ENCODE measurements at regions of chr18 and their contacts with region 1.

Region 1: DNA sequence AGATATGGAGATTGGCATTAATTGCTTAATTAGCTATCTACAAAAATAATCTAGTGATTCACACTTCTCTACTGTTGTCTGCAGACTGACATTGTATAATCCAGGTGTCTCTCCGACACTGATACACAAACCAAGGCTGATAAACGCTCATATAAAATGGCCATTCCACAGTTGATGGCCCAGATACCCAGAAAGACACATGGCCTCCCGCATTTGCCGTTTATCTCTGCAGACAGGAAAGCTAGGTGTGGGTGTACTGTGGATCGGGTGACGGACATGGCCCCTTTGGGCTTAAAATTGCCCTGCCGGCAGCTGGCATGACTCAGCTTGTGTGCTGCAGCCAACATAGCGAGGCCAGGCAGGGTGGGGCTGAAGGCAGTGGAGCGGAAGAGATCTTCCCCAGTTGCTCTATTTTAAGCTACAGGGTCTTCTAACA is 18.5 kb downstream of the PMAIP1 start:
- DNase-seq: peak; percentile 50
- ATAC-seq: peak; percentile 82
- H3K4me3 Mint-ChIP-seq: peak overlapping the region; percentile 57
- H3K27ac Mint-ChIP-seq: peak overlapping the region; percentile 44
- H3K4me1 Mint-ChIP-seq: peaks cover 40% of the 10 kb centered on the region
- H3K27me3 Mint-ChIP-seq: no peaks in the 10 kb centered on the region
- CTCF ChIP-seq: no peak

Region 2: DNA sequence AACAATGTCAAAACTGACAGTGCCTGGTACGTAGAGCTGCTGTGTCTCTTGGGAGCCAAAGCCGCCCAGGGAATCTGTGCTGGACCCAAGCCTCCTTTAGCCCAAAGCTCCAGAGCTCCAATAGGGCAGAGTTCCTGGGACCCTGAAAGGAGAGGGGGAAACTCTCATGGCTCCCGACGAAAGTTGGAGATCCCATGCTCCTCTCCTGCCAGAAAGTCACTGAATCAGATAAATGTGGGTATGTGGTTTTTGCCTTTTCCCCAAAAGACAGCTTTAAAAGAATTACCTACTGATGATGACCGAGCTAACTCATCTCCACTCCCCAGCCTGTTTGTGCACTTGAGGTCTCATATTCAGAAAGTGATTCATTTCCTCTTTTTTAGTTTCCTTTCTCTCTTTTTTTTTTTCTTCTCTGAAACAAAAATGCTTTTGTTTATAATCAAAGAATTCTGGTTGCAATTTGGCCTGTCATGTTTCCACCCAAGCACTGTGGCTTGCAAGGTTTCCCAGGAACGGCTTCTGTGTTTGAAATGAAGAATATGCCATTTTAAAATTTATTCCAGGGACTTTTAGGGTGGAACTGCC is 32.7 kb before region 1 on chr18:
- CTCF ChIA-PET with region 1: no interaction called
- POLR2A ChIA-PET with region 1: interaction called, 8 read pairs
- intact Hi-C with region 1: loop called (anchors 1 kb)
- DNase-seq: peak; percentile 38
- ATAC-seq: peak; percentile 79
- H3K4me3 Mint-ChIP-seq: peak overlapping the region; percentile 70
- H3K27ac Mint-ChIP-seq: peak overlapping the region; percentile 82
- H3K4me1 Mint-ChIP-seq: peaks cover 53% of the 10 kb centered on the region
- H3K27me3 Mint-ChIP-seq: no peaks in the 10 kb centered on the region
- CTCF ChIP-seq: no peak

Region 3: DNA sequence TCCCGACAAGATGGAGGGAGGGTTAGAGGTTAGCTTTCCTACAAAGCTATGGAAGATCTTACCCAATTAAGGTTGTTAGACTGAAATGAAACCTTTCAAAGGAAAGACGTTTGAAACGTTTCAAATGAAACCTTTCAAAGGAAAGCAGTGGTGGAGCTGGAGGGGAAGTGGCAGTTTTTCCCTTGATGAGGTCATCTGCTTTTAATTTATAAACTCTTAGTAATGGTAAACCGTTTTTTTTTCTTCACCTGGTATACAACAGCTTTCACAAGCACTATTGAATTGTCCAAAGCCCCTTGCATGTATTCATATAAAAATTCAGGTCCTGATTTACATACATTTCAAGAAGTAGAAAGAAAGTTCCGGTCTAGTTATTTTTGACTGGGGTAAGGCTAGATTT is 11.2 kb before region 1 on chr18:
- CTCF ChIA-PET with region 1: interaction called, 3 read pairs
- POLR2A ChIA-PET with region 1: interaction called, 103 read pairs
- intact Hi-C with region 1: loop called (anchors 1 kb)
- DNase-seq: no peak
- ATAC-seq: peak; percentile 19
- H3K4me3 Mint-ChIP-seq: peak overlapping the region; percentile 68
- H3K27ac Mint-ChIP-seq: peak overlapping the region; percentile 76
- H3K4me1 Mint-ChIP-seq: peaks cover 70% of the 10 kb centered on the region
- H3K27me3 Mint-ChIP-seq: no peaks in the 10 kb centered on the region
- CTCF ChIP-seq: no peak

Region 4: GRCh38 chr18:59952283-59953007 is 34.1 kb after region 1 on chr18:
- CTCF ChIA-PET with region 1: no interaction called
- POLR2A ChIA-PET with region 1: interaction called, 11 read pairs
- intact Hi-C with region 1: loop called (anchors 1 kb)
- DNase-seq: no peak
- ATAC-seq: no peak
- H3K4me3 Mint-ChIP-seq: no peak overlapping the region
- H3K27ac Mint-ChIP-seq: peak overlapping the region; percentile 50
- H3K4me1 Mint-ChIP-seq: peaks cover 26% of the 10 kb centered on the region
- H3K27me3 Mint-ChIP-seq: no peaks in the 10 kb centered on the region
- CTCF ChIP-seq: no peak

Region 5: GRCh38 chr18:59957971-59958595 is 39.7 kb after region 1 on chr18:
- CTCF ChIA-PET with region 1: no interaction called
- POLR2A ChIA-PET with region 1: interaction called, 11 read pairs
- intact Hi-C with region 1: loop called (anchors 1 kb)
- DNase-seq: no peak
- ATAC-seq: no peak
- H3K4me3 Mint-ChIP-seq: no peak overlapping the region
- H3K27ac Mint-ChIP-seq: peak overlapping the region; percentile 43
- H3K4me1 Mint-ChIP-seq: peaks cover 63% of the 10 kb centered on the region
- H3K27me3 Mint-ChIP-seq: no peaks in the 10 kb centered on the region
- CTCF ChIP-seq: no peak